ENCODE measurements at regions of chr19 and their contacts with region 1.

Region 1: GRCh38 chr19:48321622-48322591 is 3.4 kb upstream of the EMP3 start:
- DNase-seq: peak; percentile 99
- ATAC-seq: peak; percentile 68
- H3K4me3 Mint-ChIP-seq: peak overlapping the region; percentile 82
- H3K27ac Mint-ChIP-seq: peak overlapping the region; percentile 97
- H3K4me1 Mint-ChIP-seq: peaks cover 56% of the 10 kb centered on the region
- H3K27me3 Mint-ChIP-seq: no peaks in the 10 kb centered on the region

Region 2: GRCh38 chr19:48152551-48152950 is 169.4 kb before region 1 on chr19:
- CTCF ChIA-PET with region 1: no interaction called
- POLR2A ChIA-PET with region 1: no interaction called
- intact Hi-C with region 1: no loop called
- DNase-seq: peak; percentile 80
- ATAC-seq: peak; percentile 53
- H3K4me3 Mint-ChIP-seq: no peak overlapping the region
- H3K27ac Mint-ChIP-seq: no peak overlapping the region
- H3K4me1 Mint-ChIP-seq: no peaks in the 10 kb centered on the region
- H3K27me3 Mint-ChIP-seq: no peaks in the 10 kb centered on the region

Region 3: DNA sequence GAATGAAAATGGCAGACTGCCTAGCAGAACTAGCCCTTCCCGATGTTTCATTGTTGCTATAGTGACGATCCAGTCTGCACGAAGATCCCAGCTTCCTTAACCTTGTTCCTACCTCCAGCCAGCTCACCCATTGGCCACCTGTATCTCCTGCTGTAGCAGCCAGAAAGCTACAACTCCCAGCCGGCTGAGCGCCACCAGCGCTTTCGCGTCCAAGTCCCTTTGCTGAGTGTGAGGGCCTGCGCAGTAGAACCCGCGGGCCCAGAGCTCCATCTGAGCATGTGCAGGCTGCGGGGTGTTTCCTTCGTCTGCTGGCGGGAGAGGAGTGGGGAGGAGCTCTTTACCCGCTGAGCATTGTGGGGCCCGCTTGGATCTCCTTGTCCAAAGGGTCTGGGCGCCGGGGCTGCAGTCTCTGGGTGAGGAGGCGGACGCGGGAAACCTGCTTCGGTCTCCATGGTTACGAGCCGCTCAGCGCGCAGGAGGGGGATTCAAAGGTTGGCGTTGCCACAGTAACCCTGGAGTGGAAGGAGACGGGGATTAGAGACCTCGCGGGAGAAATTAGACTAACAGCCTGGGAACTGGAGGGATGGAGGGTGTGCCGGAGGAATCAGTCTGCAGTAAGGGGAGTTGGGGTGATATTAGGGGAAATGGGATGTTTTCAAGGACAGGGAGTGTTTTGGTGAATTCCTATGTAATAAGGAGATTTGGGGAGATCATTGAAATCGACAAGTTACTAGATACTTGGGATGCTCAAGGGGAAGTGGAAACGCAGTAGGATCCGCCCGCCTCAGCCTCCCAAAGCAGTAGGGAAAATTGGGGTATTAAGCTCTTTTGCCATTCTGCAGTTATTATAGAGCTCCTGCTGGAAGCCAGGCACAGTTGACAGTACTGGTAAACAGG is 117.9 kb before region 1 on chr19:
- CTCF ChIA-PET with region 1: interaction called, 4 read pairs
- POLR2A ChIA-PET with region 1: no interaction called
- intact Hi-C with region 1: loop called in 1 of 2 experiments (anchors 1 kb)
- DNase-seq: peak; percentile 97
- ATAC-seq: peak; percentile 100
- H3K4me3 Mint-ChIP-seq: no peak overlapping the region
- H3K27ac Mint-ChIP-seq: no peak overlapping the region
- H3K4me1 Mint-ChIP-seq: peaks cover 16% of the 10 kb centered on the region
- H3K27me3 Mint-ChIP-seq: no peaks in the 10 kb centered on the region

Region 4: DNA sequence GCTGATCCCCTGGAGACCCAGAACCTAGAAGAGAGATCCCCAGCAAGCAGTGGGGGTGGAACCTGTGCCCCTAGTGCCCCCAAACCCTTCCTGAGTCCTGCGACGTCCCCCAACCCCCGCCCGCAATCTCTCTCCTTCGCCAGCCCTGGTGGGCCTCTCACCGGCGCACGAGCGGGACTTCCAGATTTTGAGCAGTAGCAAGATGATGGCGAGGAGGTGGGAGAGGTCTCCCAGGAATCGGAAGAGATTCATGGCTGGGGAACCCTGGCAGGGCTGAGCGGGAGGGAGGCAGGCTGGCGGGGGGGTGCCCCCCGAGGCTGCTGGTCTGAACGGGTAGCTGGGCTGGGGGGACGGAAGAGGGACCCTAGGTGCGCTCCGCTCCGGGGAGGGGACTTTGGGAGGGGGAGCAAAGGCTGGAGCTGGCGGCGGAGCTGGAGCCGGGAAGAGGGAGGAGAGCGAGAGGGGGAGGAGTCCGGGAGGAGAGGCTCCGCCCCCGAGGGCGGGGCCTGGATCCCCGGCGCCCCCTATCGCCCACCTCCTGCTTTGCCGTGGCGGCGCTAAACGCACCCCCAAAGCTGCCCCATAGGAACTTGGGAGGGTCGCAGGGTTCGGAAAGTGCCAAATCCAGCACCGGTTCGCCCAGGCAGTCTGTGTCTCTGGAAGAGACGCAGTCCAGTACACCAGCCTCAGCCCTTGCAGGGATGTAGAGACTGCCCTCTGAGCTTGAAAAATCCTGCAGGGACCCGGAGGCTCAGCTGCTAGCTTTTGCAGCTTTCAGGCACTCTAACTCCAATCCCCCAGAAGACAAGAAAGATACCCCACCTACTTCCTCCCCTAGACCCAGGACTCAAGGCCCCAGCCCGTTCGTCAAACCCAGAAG is 69.4 kb after region 1 on chr19 and contains the start of gene KDELR1:
- CTCF ChIA-PET with region 1: interaction called, 3 read pairs
- POLR2A ChIA-PET with region 1: no interaction called
- intact Hi-C with region 1: loop called (anchors 1 to 5 kb)
- DNase-seq: peak; percentile 85
- ATAC-seq: peak; percentile 82
- H3K4me3 Mint-ChIP-seq: peak within 1 kb of the TSS; percentile 92
- H3K27ac Mint-ChIP-seq: peak within 1 kb of the TSS; percentile 93
- H3K4me1 Mint-ChIP-seq: peaks cover 17% of the 10 kb centered on the region
- H3K27me3 Mint-ChIP-seq: peaks cover 19% of the 10 kb centered on the region
- total RNA-seq, gene KDELR1: 69.5 to 78.8 TPM

Region 5: DNA sequence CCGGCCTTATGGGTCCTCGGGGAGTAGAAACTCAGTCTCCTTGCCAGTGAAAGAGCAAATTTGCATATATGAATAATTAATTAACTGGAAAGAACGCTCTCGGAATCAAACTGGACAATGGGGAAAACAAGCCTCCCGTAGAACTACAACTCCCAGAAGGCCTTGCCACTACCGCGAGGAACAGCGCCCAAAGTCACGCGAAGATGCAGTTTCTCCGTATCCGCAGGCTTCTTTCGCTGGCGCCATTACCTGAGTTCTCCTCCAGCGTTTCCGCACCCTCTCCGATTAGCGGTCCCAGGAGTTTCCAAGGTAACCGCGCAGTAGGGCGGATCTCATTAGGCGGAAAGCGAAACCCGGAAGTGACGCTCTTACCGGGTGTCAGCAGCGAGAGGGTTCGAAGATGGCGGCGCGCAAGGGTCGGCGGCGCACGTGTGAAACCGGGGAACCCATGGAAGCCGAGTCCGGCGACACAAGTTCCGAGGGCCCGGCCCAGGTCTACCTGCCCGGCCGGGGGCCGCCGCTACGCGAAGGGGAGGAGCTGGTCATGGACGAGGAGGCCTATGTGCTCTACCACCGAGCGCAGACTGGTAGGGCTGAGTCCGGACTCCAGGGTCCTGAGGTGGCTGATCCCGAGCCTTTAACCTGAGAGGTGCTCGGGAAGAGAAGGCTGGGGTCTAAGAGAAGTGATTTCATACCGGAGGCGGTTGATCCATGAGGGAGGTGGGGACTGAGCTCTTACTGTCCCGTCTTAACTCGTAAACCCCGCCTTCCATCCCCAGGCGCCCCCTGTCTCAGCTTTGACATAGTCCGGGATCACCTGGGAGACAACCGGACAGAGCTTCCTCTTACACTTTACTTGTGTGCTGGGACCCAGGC is 123.9 kb after region 1 on chr19 and contains the start of gene GRWD1:
- CTCF ChIA-PET with region 1: no interaction called
- POLR2A ChIA-PET with region 1: no interaction called
- intact Hi-C with region 1: loop called (anchors 1 to 5 kb)
- DNase-seq: peak; percentile 97
- ATAC-seq: peak; percentile 98
- H3K4me3 Mint-ChIP-seq: peak within 1 kb of the TSS; percentile 86
- H3K27ac Mint-ChIP-seq: peak within 1 kb of the TSS; percentile 89
- H3K4me1 Mint-ChIP-seq: peaks cover 37% of the 10 kb centered on the region
- H3K27me3 Mint-ChIP-seq: peaks cover 20% of the 10 kb centered on the region
- total RNA-seq, gene GRWD1: 43.4 to 51.3 TPM

Region 6: DNA sequence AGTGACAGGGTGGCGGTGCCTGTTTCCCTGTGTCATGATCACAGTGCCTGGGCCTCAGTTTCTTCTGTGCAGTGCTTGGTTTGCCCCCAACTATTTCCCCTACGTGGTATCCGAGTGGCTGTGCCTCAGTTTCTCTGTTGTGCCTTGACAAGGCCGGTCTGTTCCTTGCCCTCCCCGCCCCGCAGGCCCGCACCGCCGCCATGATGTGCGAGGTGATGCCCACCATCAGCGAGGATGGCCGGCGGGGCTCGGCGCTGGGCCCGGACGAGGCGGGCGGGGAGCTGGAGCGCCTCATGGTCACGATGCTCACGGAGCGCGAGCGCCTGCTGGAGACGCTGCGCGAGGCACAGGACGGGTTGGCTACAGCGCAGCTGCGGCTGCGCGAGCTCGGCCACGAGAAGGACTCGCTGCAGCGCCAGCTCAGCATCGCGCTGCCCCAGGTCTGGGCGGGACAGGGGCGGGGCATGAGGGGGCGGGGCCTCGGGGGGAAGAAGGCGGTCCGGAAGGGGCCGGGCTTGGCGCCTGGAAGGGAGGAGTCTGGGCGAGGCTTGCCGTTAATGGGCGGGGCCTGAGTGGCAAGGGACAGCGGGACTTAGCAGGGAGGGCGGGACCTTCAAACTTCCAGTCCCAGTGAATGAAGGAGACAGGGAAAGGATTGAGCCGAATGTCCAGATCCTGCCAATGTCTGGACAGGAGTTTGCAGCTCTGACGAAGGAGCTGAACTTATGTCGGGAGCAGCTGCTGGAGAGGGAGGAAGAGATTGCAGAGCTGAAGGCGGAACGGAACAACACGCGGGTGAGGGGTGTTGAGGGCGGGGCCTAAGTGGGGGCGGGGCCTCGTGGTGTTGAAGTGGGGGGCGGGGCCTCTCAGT is 806.0 kb after region 1 on chr19:
- CTCF ChIA-PET with region 1: no interaction called
- POLR2A ChIA-PET with region 1: no interaction called
- intact Hi-C with region 1: loop called in 1 of 2 experiments (anchors 10 kb)
- DNase-seq: peak; percentile 98
- ATAC-seq: peak; percentile 95
- H3K4me3 Mint-ChIP-seq: peak overlapping the region; percentile 76
- H3K27ac Mint-ChIP-seq: peak overlapping the region; percentile 92
- H3K4me1 Mint-ChIP-seq: peaks cover 11% of the 10 kb centered on the region
- H3K27me3 Mint-ChIP-seq: no peaks in the 10 kb centered on the region